Cardiac septum (tissue), 1 donor: ENCODE measurements at regions of chr15 and their contacts with region 1.

Region 1: GRCh38 chr15:78241007-78241406 is 6.6 kb upstream of the ACSBG1 start:
- DNase-seq: peak; percentile 90

Region 2: GRCh38 chr15:77959432-77959879 is 281.6 kb before region 1 on chr15:
- intact Hi-C with region 1: loop called (anchors 5 kb)
- DNase-seq: peak; percentile 92

Region 3: DNA sequence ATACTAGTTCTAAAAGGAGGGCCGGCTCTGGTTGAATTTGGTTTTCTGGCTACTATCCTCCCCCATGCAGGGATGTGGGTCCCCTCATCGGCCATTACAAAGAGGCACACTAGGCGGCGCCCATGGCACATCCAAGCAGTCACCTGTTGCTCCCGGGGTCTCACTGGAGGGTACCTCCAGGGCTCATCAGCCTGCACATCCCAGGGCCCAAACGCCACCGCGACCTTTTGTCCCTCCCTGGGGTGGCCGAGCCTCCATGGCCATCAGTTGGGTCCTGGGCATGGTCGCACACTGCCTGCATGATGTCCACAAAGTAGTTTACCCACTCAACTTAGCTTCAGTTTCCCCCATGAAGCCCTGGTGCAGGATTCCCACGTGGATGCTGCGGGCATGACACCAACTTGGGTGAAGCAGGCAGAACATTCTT is 63.5 kb before region 1 on chr15:
- intact Hi-C with region 1: loop called (anchors 2 kb)
- DNase-seq: no peak

Region 4: GRCh38 chr15:78195735-78196201 is 45.2 kb before region 1 on chr15:
- intact Hi-C with region 1: loop called (anchors 5 kb)
- DNase-seq: peak; percentile 75